ENCODE measurements at regions of chr3 and their contacts with region 1.

Region 1: DNA sequence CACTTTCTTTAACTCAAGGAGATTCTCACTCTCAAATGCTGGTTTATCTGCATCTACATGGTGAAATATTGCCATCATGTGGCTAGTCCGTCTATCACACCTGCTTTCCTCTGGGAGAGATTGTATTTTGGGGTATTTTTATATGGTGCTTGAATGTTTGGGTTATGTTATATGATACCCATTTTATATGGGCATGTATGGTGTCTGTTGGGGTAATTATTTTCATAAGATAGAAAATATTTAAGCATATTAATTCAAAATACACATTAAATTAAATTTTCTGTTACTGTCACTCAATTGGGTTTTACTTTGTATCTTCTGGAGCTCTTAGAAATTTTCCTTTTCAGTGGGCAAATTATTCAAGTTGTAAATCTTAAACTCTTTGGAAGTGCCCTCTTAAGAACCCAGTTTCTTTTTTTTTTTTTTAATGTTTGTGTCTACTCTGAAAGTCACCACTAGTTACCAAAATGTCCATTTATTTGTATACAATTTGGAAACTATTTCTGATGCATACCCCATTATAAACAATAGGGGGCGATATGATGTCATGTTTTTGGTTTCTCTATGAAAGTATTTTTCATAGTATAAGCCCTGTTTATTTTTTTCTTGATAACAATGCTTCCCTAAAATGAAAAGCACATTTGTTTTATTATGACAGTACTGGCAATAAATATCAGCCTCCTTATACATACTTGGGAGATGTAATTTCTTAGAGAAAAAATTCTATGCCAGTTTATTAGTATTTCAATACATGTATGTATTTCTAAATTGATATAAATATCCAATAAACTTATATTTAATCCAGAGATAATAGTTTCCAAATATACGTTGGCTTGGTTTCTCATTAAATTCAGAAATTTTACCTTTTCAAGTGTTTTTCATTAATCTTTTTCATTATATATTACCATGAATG is 36.1 kb upstream of the PLSCR5 start:
- DNase-seq: peak; percentile 23 to 36 (median 29)
- ATAC-seq: peak; percentile 85
- H3K4me3 ChIP-seq: no peak overlapping the region
- H3K27ac ChIP-seq: no peak overlapping the region
- H3K4me1 ChIP-seq: no peaks in the 10 kb centered on the region
- H3K27me3 ChIP-seq: no peaks in the 10 kb centered on the region
- CTCF ChIP-seq: peak; percentile 35 to 67 (median 55); a peak in 5 of 6 replicates
- EP300 ChIP-seq: no peak
- POLR2A ChIP-seq: no peak
- RAD21 ChIP-seq: peak; percentile 37 to 71

Region 2: GRCh38 chr3:146065573-146066006 is 575.6 kb before region 1 on chr3:
- CTCF ChIA-PET with region 1: no interaction called
- POLR2A ChIA-PET with region 1: no interaction called
- in situ Hi-C with region 1: no loop called
- intact Hi-C with region 1: loop called (anchors 10 kb)
- DNase-seq: peak in 2 of 4 experiments; percentile 8 to 53
- ATAC-seq: no peak
- H3K4me3 ChIP-seq: no peak overlapping the region
- H3K27ac ChIP-seq: no peak overlapping the region
- H3K4me1 ChIP-seq: no peaks in the 10 kb centered on the region
- H3K27me3 ChIP-seq: no peaks in the 10 kb centered on the region
- CTCF ChIP-seq: peak; percentile 28 to 62 (median 31); a peak in 3 of 6 replicates
- EP300 ChIP-seq: no peak
- POLR2A ChIP-seq: no peak
- RAD21 ChIP-seq: peak; percentile 60 to 75

Region 3: DNA sequence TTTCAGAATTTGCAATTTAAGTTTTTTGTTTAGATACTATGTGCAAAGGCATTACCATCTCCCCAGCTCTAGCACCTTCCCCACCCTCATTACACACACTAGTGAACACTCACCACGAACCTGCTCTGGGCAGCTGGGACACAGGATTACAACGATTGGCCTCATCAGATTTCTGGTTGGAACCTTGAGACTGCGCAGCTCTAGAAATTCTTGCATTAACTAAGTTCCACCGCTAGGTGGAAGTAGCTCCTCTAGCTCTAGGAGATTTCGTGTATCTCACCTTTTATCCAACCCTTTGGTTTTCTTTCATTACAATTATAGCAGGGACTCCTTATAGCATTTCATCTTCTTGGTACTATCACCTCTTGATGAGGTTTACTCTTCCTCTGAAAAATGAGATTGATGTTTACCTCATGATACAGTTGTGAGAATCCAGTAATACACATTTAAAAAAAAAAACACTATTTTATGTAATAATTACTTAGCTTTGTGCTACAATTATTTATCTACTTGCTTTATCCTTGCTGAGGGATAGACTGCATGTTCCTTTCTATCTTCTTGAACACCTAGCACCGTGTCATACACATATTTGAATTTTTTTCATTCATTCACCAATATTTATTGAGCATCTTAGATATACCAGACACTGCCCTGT is 451.6 kb before region 1 on chr3:
- CTCF ChIA-PET with region 1: interaction called, 3 read pairs
- POLR2A ChIA-PET with region 1: no interaction called
- in situ Hi-C with region 1: no loop called
- intact Hi-C with region 1: loop called (anchors 1 kb)
- DNase-seq: peak; percentile 32 to 52 (median 37)
- ATAC-seq: peak; percentile 90
- H3K4me3 ChIP-seq: no peak overlapping the region
- H3K27ac ChIP-seq: no peak overlapping the region
- H3K4me1 ChIP-seq: no peaks in the 10 kb centered on the region
- H3K27me3 ChIP-seq: no peaks in the 10 kb centered on the region
- CTCF ChIP-seq: peak; percentile 46 to 65 (median 64)
- EP300 ChIP-seq: no peak
- POLR2A ChIP-seq: no peak
- RAD21 ChIP-seq: peak; percentile 65 to 73

Region 4: DNA sequence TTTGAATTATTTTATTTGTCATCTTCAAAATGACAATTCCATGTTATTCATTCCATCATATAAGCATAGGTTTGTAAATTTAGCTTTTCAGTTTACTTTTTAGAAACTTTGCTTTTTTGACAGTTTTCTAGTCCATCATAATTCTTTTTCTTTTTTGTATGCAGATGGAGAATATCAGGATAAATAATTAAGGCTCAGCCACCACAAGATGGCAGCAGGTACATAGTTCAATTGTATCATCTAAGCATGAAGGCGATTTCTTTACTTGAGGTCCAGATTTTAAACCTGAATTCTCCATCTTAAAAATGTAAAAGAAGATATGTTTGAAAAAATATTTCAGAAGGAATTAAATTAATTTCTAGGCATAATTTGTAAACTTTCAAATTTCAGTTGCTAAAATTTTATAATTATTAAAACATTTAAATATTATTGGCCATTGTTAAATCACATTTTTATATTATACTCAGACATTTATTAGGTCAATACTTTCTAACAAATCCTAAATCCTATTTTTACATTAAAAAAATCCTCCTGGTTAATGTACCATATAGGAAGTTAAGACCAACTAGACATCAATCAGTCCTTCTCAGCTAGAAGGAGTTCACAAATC is 51.2 kb before region 1 on chr3:
- CTCF ChIA-PET with region 1: no interaction called
- POLR2A ChIA-PET with region 1: no interaction called
- in situ Hi-C with region 1: no loop called
- intact Hi-C with region 1: loop called (anchors 2 kb)
- DNase-seq: peak; percentile 13 to 46 (median 26)
- ATAC-seq: 0 out of 3 replicates have a peak, but pooled peaks have one; percentile 51
- H3K4me3 ChIP-seq: no peak overlapping the region
- H3K27ac ChIP-seq: no peak overlapping the region
- H3K4me1 ChIP-seq: no peaks in the 10 kb centered on the region
- H3K27me3 ChIP-seq: no peaks in the 10 kb centered on the region
- CTCF ChIP-seq: peak in 2 of 3 experiments; percentile 40 to 60; a peak in 3 of 6 replicates
- EP300 ChIP-seq: no peak
- POLR2A ChIP-seq: no peak
- RAD21 ChIP-seq: peak; percentile 61

Region 5: GRCh38 chr3:147191795-147192385 is 550.7 kb after region 1 on chr3:
- CTCF ChIA-PET with region 1: no interaction called
- POLR2A ChIA-PET with region 1: no interaction called
- in situ Hi-C with region 1: no loop called
- intact Hi-C with region 1: loop called (anchors 5 kb)
- DNase-seq: peak; percentile 2 to 44 (median 9)
- ATAC-seq: no peak
- H3K4me3 ChIP-seq: no peak overlapping the region
- H3K27ac ChIP-seq: no peak overlapping the region
- H3K4me1 ChIP-seq: no peaks in the 10 kb centered on the region
- H3K27me3 ChIP-seq: no peaks in the 10 kb centered on the region
- CTCF ChIP-seq: peak; percentile 27 to 56 (median 34); a peak in 3 of 6 replicates
- EP300 ChIP-seq: no peak
- POLR2A ChIP-seq: no peak
- RAD21 ChIP-seq: peak in 1 of 2 experiments; percentile 41; a peak in 2 of 4 replicates

Measured in K562 (cell line).